OCI-LY7 (cell line): ENCODE measurements at regions of chr11 and their contacts with region 1.

Region 1: DNA sequence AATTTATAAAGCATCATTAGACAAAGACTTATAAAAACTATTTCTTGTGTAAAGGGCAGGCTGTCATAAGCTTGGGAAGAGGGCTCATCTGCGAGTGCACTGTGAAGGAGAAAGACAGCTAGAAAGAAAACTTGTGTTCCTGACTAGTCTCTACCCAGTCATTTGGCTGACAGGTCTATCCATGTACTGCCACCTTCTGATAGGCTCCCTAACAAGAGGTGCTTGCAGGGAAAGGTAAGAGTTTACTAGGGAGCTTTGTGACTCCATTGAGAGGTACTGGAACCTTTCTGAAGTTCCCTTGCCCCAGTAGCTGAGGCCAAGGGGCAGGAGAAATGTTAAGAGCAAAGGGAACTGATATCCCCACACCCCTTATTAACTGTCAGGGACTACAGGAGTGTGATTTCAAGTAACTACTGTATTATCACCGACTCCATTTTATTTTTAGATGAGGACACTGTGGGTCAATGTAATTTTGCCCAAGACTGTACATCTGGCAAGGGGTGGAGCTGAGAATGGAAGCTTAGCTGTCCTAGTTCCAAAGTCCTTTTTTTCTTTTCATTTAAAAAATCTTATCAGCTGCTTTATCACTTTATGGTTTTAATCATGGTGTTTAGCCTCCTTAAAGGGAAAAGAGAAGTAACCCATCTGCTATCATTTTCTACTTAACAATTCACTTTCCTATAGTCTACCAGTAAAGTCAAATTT is 129.4 kb downstream of the ARHGAP20 start:
- DNase-seq: no peak
- H3K4me3 ChIP-seq: no peak overlapping the region
- H3K27ac ChIP-seq: no peak overlapping the region
- H3K4me1 ChIP-seq: no peaks in the 10 kb centered on the region
- CTCF ChIP-seq: no peak

Region 2: DNA sequence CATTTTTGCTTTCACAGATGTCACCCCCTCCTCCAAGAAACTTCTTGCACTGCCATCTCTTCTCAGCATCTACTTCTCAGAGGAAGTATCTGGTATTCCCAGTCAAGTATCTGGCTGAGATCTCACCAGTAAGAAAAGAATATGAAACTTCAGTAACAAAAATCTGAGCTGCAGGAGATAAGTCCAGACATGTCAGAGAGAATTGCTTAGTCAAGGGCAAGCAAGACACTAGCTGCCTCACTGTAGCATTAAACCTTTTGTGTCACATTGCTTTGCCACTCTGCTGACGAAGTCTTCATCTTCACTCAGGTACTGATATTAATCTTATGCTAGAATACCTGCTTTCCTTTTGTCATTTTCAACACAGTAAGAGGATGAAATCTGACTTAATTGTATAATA is 560.3 kb before region 1 on chr11:
- CTCF ChIA-PET with region 1: no interaction called
- POLR2A ChIA-PET with region 1: no interaction called
- intact Hi-C with region 1: no loop called
- DNase-seq: no peak
- H3K4me3 ChIP-seq: no peak overlapping the region
- H3K27ac ChIP-seq: no peak overlapping the region
- H3K4me1 ChIP-seq: peaks cover 17% of the 10 kb centered on the region
- CTCF ChIP-seq: no peak

Region 3: DNA sequence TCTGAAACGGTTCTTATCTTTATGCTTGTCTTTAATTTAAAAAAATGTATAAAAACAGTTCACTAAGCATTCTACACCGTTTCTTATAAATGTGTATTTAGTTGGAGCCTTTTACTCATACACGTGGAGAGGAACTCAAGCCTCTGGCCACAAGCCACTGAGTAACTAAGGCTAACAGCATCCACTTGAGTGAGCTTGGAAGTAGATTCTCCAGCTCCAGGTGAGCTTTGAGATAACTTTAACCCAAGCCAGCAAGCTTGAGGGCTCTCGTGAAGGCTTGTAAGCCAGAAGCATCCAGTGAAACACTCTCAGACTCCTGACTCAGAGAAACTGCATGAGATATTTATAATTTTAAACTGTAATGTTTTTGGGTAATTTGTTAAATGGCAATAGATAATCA is 46.7 kb after region 1 on chr11:
- CTCF ChIA-PET with region 1: no interaction called
- POLR2A ChIA-PET with region 1: no interaction called
- intact Hi-C with region 1: loop called (anchors 5 kb)
- DNase-seq: no peak
- H3K4me3 ChIP-seq: no peak overlapping the region
- H3K27ac ChIP-seq: no peak overlapping the region
- H3K4me1 ChIP-seq: no peaks in the 10 kb centered on the region
- CTCF ChIP-seq: no peak

Region 4: DNA sequence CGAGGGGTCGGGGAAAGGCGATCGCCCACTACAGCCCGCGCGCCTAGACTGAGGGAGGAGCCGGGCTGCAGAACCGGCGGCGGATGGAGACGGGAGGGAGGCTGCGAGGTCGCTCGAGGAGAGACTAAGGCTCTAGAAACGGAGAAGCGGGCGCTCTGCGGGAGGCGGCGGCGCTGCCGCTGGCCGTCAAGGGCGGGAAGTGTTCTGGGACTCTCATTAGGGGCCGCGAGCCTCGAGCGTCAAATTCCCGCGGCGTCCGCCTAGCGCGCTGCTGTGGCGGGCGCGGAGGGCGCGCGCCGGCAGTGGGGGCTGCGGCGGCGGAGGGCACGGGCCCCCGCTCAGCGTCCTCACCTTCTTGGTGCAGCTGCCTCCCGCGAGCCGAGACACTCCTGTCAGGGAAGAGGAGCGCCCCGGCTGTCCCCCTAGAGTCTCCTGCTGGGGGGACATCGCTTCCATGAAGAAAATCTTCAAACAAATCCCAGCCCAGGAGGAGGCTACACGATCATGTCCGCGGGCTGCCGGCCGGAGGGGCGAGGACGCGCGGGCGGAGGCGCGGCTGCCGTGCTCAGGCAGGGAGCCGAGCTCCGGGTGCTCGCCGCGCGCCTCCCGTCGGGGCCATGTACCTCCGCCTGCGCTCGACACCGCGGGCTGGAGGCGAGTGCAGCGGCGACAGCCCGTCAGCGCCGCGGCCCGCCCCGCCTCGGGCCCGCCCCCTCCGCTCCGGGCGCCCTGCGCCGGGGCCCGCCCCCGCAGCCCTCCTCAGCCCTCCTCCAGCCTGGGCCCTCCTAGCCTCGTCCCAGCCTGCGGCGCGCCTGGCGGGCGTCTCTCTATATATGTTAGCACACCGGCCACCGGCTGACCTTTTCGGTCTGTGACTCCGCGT is 129.1 kb after region 1 on chr11 and contains the start of gene ARHGAP20:
- CTCF ChIA-PET with region 1: no interaction called
- POLR2A ChIA-PET with region 1: no interaction called
- intact Hi-C with region 1: no loop called
- DNase-seq: no peak
- H3K4me3 ChIP-seq: no peak within 1 kb of the TSS
- H3K27ac ChIP-seq: no peak within 1 kb of the TSS
- H3K4me1 ChIP-seq: no peaks in the 10 kb centered on the region
- CTCF ChIP-seq: no peak
- total RNA-seq, gene ARHGAP20: not detected in 2 replicates